ENCODE measurements at regions of chr1 and their contacts with region 1.

Region 1: GRCh38 chr1:109773146-109773899 is 9.6 kb upstream of the EPS8L3 start:
- DNase-seq: peak; percentile 82 to 96 (median 90)
- H3K4me3 ChIP-seq: no peak overlapping the region
- H3K27ac ChIP-seq: no peak overlapping the region
- H3K4me1 ChIP-seq: no peaks in the 10 kb centered on the region
- H3K27me3 ChIP-seq: no peaks in the 10 kb centered on the region
- CTCF ChIP-seq: peak; percentile 74 to 97 (median 92)
- POLR2A ChIP-seq: no peak

Region 2: GRCh38 chr1:109610609-109611307 is 162.6 kb before region 1 on chr1:
- intact Hi-C with region 1: no loop called
- DNase-seq: no peak
- H3K4me3 ChIP-seq: no peak overlapping the region
- H3K27ac ChIP-seq: no peak overlapping the region
- H3K4me1 ChIP-seq: no peaks in the 10 kb centered on the region
- H3K27me3 ChIP-seq: no peaks in the 10 kb centered on the region
- CTCF ChIP-seq: no peak
- POLR2A ChIP-seq: no peak

Region 3: DNA sequence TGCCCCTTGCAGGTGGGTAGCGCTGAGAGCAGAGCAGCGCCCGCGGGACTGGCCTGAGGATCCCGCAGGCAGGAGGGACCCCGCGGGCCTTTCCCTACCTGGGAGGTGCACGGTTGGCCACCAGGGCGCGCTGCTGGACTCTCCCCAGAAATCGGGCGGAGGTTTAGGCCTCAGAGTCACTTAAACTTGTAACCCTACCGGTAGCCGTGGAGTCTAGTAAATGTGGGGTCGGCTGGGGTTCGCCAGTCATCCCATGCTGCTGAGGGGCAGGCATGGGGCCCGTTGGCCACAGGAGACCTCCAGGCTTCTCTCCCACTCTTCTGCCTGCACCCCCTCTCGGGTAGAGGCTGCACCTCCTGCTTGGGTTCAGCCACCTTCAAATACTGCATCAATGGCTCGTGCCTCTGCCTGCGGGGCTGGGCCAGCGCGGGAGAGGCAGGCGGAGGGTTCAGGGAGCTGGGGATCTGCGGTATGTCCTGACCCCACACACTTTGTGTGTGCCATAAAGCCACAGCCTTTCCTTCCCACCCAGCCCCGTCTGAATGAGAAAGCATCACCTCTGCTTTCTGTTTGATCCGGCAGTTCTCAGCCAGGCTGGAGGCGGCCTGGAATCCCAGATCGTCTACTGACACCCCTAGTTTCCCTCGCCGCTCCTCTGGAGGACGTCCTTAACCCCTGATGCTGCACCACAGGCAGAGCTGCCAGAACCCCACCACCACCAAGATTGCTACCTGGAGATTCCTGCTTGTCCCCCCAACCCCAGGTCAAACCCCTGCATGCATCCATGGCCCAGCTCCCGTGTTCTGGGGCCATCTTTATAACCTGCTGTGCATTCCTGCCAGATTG is 129.7 kb before region 1 on chr1:
- intact Hi-C with region 1: loop called (anchors 2 to 5 kb)
- DNase-seq: peak; percentile 74 to 91 (median 85)
- H3K4me3 ChIP-seq: no peak overlapping the region
- H3K27ac ChIP-seq: no peak overlapping the region
- H3K4me1 ChIP-seq: no peaks in the 10 kb centered on the region
- H3K27me3 ChIP-seq: no peaks in the 10 kb centered on the region
- CTCF ChIP-seq: peak; percentile 79 to 91 (median 84)
- POLR2A ChIP-seq: no peak

Measured in adrenal gland (tissue), 19 donors.